ENCODE measurements at regions of chr2 and their contacts with region 1.

Region 1: GRCh38 chr2:213021971-213022899 is 129.2 kb downstream of the IKZF2 start:
- DNase-seq: peak; percentile 87
- ATAC-seq: peak; percentile 78
- H3K4me3 ChIP-seq: peak overlapping the region; percentile 76
- H3K27ac ChIP-seq: peak overlapping the region; percentile 96
- H3K4me1 ChIP-seq: peaks cover 14% of the 10 kb centered on the region; the same call in 1 of the 2 replicates
- H3K27me3 ChIP-seq: no peaks in the 10 kb centered on the region
- CTCF ChIP-seq: no peak
- EP300 ChIP-seq: peak; percentile 80 to 87
- POLR2A ChIP-seq: peak; percentile 88
- RAD21 ChIP-seq: peak; percentile 27; the same call in 1 of the 2 replicates

Region 2: DNA sequence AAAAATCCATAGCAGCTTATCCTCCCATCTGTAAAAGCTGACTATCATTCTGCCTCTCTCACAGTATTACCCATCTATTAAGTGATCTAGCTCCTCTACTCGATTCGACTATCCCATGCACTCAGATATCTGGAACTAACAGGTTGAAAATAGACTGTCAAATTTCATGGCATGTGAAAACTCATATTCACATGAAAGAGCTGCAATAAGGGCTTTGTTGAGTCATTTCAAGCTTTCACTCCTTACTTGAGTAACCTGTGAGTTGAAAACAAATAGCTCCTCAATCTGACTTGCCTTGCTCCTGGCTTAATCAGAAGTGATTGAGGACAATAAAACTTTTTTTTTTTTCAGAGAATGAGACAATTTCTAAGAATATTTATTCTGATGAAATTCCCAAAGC is 291.2 kb before region 1 on chr2:
- CTCF ChIA-PET with region 1: no interaction called
- POLR2A ChIA-PET with region 1: no interaction called
- RAD21 ChIA-PET with region 1: no interaction called
- SMC1A ChIA-PET with region 1: no interaction called
- in situ Hi-C with region 1: no loop called
- intact Hi-C with region 1: loop called (anchors 5 kb)
- DNase-seq: peak; percentile 79
- ATAC-seq: peak; percentile 78
- H3K4me3 ChIP-seq: no peak overlapping the region
- H3K27ac ChIP-seq: 0 out of 2 replicates have a peak overlapping the region, but pooled peaks have one; percentile 27
- H3K4me1 ChIP-seq: peaks cover 16% of the 10 kb centered on the region
- H3K27me3 ChIP-seq: no peaks in the 10 kb centered on the region
- CTCF ChIP-seq: no peak
- EP300 ChIP-seq: peak; percentile 55 to 81; a peak in 2 of 4 replicates
- POLR2A ChIP-seq: no peak
- RAD21 ChIP-seq: peak; percentile 21; the same call in 1 of the 2 replicates

Region 3: DNA sequence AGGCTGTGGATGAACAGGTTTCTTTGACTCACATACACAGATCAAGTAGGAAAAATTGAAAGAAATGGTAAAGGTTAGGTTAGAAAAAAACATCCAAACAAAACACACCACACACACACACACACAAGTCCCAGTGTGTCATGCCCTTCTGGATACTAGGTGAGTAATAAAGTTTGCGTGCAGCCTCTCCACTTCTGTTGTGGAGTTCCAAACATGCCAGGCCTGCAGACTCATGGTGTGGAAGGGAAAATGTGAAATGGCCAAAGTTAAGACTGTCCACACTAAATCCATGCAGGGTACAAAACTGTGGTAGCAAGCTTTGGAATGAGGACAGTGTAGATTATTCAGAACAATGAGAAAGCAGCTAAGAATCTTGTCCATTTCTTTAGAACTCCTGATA is 14.6 kb after region 1 on chr2:
- CTCF ChIA-PET with region 1: interaction called, 11 read pairs
- POLR2A ChIA-PET with region 1: interaction called, 6 read pairs
- RAD21 ChIA-PET with region 1: interaction called, 31 read pairs
- SMC1A ChIA-PET with region 1: interaction called, 69 read pairs
- in situ Hi-C with region 1: no loop called
- intact Hi-C with region 1: no loop called
- DNase-seq: no peak
- ATAC-seq: peak; percentile 2; the same call in 1 of the 3 replicates
- H3K4me3 ChIP-seq: no peak overlapping the region
- H3K27ac ChIP-seq: peak overlapping the region; percentile 17; the same call in 1 of the 2 replicates
- H3K4me1 ChIP-seq: peaks cover 26% of the 10 kb centered on the region
- H3K27me3 ChIP-seq: no peaks in the 10 kb centered on the region
- CTCF ChIP-seq: no peak
- EP300 ChIP-seq: no peak
- POLR2A ChIP-seq: no peak
- RAD21 ChIP-seq: no peak

Region 4: GRCh38 chr2:213227458-213227857 is 205.2 kb after region 1 on chr2:
- CTCF ChIA-PET with region 1: interaction called, 4 read pairs
- POLR2A ChIA-PET with region 1: interaction called, 18 read pairs
- RAD21 ChIA-PET with region 1: interaction called, 72 read pairs
- SMC1A ChIA-PET with region 1: interaction called, 237 read pairs
- in situ Hi-C with region 1: loop called (anchors 5 kb)
- intact Hi-C with region 1: no loop called
- DNase-seq: peak; percentile 88
- ATAC-seq: peak; percentile 82
- H3K4me3 ChIP-seq: no peak overlapping the region
- H3K27ac ChIP-seq: peak overlapping the region; percentile 92
- H3K4me1 ChIP-seq: peaks cover 49% of the 10 kb centered on the region
- H3K27me3 ChIP-seq: no peaks in the 10 kb centered on the region
- CTCF ChIP-seq: no peak
- EP300 ChIP-seq: no peak; a peak in 3 of 4 replicates
- POLR2A ChIP-seq: no peak
- RAD21 ChIP-seq: peak; percentile 30; the same call in 1 of the 2 replicates

Region 5: GRCh38 chr2:213238753-213239495 is 216.7 kb after region 1 on chr2:
- CTCF ChIA-PET with region 1: interaction called, 8 read pairs
- POLR2A ChIA-PET with region 1: interaction called, 30 read pairs
- RAD21 ChIA-PET with region 1: interaction called, 72 read pairs
- SMC1A ChIA-PET with region 1: interaction called, 237 read pairs
- in situ Hi-C with region 1: no loop called
- intact Hi-C with region 1: loop called (anchors 1 kb)
- DNase-seq: no peak
- ATAC-seq: peak; percentile 35
- H3K4me3 ChIP-seq: peak overlapping the region; percentile 58
- H3K27ac ChIP-seq: peak overlapping the region; percentile 98
- H3K4me1 ChIP-seq: peaks cover 47% of the 10 kb centered on the region
- H3K27me3 ChIP-seq: no peaks in the 10 kb centered on the region
- CTCF ChIP-seq: no peak
- EP300 ChIP-seq: peak; percentile 8 to 53; a peak in 1 of 4 replicates
- POLR2A ChIP-seq: no peak
- RAD21 ChIP-seq: no peak

Region 6: GRCh38 chr2:214737188-214737587 is 1715.0 kb after region 1 on chr2:
- CTCF ChIA-PET with region 1: no interaction called
- POLR2A ChIA-PET with region 1: no interaction called
- RAD21 ChIA-PET with region 1: no interaction called
- SMC1A ChIA-PET with region 1: no interaction called
- in situ Hi-C with region 1: loop called (anchors 25 kb)
- intact Hi-C with region 1: no loop called
- DNase-seq: peak; percentile 92
- ATAC-seq: peak; percentile 88
- H3K4me3 ChIP-seq: no peak overlapping the region
- H3K27ac ChIP-seq: peak overlapping the region; percentile 89
- H3K4me1 ChIP-seq: peaks cover 12% of the 10 kb centered on the region
- H3K27me3 ChIP-seq: no peaks in the 10 kb centered on the region
- CTCF ChIP-seq: no peak
- EP300 ChIP-seq: peak; percentile 97 to 98; a peak in 3 of 4 replicates
- POLR2A ChIP-seq: no peak
- RAD21 ChIP-seq: no peak